B cell (primary cell): ENCODE measurements at regions of chr21 and their contacts with region 1.

Region 1: DNA sequence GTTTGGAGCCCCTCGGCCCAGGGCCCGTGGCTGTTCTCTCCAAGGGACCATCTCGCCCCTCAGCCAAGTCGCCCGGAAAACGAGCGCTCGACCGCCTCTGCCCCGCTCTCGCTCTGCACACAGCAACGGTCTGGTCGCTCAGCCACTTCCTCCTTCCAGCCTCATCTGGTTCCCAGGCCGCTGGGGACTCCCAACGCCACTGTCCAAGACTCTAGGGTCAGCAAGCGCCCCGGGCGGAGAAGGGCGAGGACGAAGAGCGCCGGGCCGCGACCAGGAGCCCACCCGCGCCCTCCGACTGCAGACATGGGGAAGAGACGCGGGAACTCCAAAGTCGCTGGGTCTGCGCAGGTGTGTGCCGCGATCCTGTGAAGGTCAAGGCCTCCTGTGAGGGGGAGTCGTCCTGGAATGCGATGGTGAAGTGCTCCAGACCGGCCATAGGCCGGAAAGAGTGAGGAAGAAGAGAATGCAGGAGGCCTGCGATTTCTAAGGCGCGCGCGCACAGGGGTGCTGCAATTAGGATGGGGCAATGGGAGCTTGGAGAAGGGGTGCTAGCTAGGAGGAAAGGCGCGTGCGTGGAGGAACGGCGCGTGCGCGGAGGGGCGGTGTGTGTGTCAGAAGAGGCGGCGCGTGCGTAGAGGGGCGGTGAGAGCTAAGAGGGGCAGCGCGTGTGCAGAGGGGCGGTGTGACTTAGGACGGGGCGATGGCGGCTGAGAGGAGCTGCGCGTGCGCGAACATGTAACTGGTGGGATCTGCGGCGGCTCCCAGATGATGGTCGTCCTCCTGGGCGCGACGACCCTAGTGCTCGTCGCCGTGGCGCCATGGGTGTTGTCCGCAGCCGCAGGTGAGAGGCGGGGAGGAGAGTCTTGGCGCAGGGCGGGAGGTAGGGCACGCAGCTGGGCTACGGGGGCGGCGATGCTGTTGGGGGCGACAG is at the start of gene IFNAR1:
- DNase-seq: peak; percentile 99
- ATAC-seq: peak; percentile 81
- H3K4me3 ChIP-seq: peak within 1 kb of the TSS; percentile 83 to 98 (median 97)
- H3K4me3 Mint-ChIP-seq: no peak within 1 kb of the TSS
- H3K27ac ChIP-seq: peak within 1 kb of the TSS; percentile 91 to 97
- H3K27ac Mint-ChIP-seq: no peak within 1 kb of the TSS
- H3K4me1 ChIP-seq: peaks cover 28 to 35% of the 10 kb centered on the region in 2 donors
- H3K4me1 Mint-ChIP-seq: peaks cover 30% of the 10 kb centered on the region
- H3K27me3 ChIP-seq: no peaks in the 10 kb centered on the region
- H3K27me3 Mint-ChIP-seq: no peaks in the 10 kb centered on the region
- CTCF ChIP-seq: no peak
- total RNA-seq, gene IFNAR1: 55.7 and 57.7 TPM in 2 replicates

Region 2: DNA sequence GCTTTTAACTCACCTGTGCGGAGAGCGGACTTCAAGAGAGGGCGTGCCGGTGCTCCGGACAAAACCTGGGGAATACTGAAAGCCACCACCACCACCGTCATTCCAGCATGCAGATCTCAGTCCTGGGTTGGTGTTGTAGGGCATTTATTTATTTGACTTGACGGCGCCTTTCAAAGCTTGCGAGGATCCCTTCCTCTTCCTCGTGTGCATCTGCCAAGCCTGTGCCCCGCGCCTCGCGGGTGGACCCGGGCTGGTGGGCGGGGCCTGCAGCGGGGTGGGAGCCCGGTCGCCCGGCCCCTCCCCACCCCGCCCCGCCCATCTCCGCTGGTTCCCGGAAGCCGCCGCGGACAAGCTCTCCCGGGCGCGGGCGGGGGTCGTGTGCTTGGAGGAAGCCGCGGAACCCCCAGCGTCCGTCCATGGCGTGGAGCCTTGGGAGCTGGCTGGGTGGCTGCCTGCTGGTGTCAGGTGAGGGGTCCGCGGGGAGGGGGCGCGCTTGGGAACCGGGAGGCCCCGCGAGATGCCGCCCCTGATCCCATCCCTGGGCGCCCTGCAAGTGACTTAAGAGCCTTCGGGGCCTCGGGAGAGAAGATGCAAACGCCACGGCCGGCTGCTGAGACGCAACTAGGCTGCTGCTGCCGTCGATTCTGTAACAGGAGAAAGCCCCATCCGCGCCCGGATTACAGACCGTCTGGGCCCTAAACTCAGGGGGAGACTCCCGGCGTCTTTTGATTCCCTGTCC is 58.3 kb before region 1 on chr21 and contains the start of gene IL10RB:
- CTCF ChIA-PET with region 1: interaction called, 10 read pairs
- POLR2A ChIA-PET with region 1: interaction called, 22 read pairs
- intact Hi-C with region 1: loop called (anchors 1 kb)
- DNase-seq: peak; percentile 87
- ATAC-seq: peak; percentile 77
- H3K4me3 ChIP-seq: peak within 1 kb of the TSS; percentile 71 to 94 (median 88)
- H3K4me3 Mint-ChIP-seq: peak within 1 kb of the TSS; percentile 98
- H3K27ac ChIP-seq: peak within 1 kb of the TSS; percentile 82 to 91
- H3K27ac Mint-ChIP-seq: peak within 1 kb of the TSS; percentile 95
- H3K4me1 ChIP-seq: peaks cover 35 to 56% of the 10 kb centered on the region in 2 donors
- H3K4me1 Mint-ChIP-seq: peaks cover 55% of the 10 kb centered on the region
- H3K27me3 ChIP-seq: no peaks in the 10 kb centered on the region
- H3K27me3 Mint-ChIP-seq: no peaks in the 10 kb centered on the region
- CTCF ChIP-seq: no peak
- total RNA-seq, gene IL10RB: 32.5 and 35.5 TPM in 2 replicates

Region 3: DNA sequence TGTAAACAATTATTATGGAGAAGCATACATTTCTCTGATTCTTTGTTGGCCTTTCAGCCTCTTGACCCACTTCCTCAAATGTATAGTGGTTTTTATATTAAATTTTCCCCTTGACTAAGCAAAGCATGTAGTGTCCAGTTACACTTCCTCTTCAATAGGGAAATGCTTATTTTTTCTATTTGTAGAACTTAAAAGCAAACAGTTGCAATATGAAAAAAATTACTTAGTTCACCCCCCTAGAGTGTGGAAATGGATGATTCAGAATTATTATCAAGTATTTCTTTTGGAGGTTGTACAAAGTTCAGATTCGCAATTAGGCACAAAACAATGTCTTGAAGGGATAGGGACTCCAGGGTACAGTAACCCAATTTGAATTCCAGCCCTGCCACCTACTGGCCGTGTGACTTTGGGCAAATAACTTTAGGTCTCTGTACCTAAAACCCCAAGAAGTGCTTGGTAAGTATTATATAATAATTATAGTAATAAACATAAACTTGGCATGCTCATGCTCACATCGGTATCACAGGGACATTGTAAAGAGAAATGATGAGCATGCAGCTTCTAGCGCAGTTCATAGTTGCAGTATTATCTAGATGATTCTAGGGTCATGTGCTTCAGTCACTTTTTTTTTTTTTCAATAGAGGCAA is 50.0 kb after region 1 on chr21:
- CTCF ChIA-PET with region 1: no interaction called
- POLR2A ChIA-PET with region 1: interaction called, 10 read pairs
- intact Hi-C with region 1: loop called (anchors 2 kb)
- DNase-seq: peak; percentile 82
- ATAC-seq: peak; percentile 79
- H3K4me3 ChIP-seq: peak overlapping the region; percentile 7 to 33 (median 26)
- H3K4me3 Mint-ChIP-seq: peak overlapping the region; percentile 76
- H3K27ac ChIP-seq: peak overlapping the region; percentile 76 to 87
- H3K27ac Mint-ChIP-seq: peak overlapping the region; percentile 89
- H3K4me1 ChIP-seq: peaks cover 83 to 91% of the 10 kb centered on the region in 2 donors
- H3K4me1 Mint-ChIP-seq: peaks cover 72% of the 10 kb centered on the region
- H3K27me3 ChIP-seq: no peaks in the 10 kb centered on the region
- H3K27me3 Mint-ChIP-seq: no peaks in the 10 kb centered on the region
- CTCF ChIP-seq: peak; percentile 51

Region 4: GRCh38 chr21:33403779-33404585 is 79.4 kb after region 1 on chr21:
- CTCF ChIA-PET with region 1: interaction called, 12 read pairs
- POLR2A ChIA-PET with region 1: interaction called, 7 read pairs
- intact Hi-C with region 1: loop called (anchors 1 kb)
- DNase-seq: peak; percentile 67
- ATAC-seq: peak; percentile 39
- H3K4me3 ChIP-seq: peak overlapping the region; percentile 85 to 94 (median 91)
- H3K4me3 Mint-ChIP-seq: peak overlapping the region; percentile 100
- H3K27ac ChIP-seq: peak overlapping the region; percentile 75 to 83
- H3K27ac Mint-ChIP-seq: peak overlapping the region; percentile 99
- H3K4me1 ChIP-seq: peaks cover 59 to 81% of the 10 kb centered on the region in 2 donors
- H3K4me1 Mint-ChIP-seq: peaks cover 71% of the 10 kb centered on the region
- H3K27me3 ChIP-seq: no peaks in the 10 kb centered on the region
- H3K27me3 Mint-ChIP-seq: no peaks in the 10 kb centered on the region
- CTCF ChIP-seq: no peak

Region 5: DNA sequence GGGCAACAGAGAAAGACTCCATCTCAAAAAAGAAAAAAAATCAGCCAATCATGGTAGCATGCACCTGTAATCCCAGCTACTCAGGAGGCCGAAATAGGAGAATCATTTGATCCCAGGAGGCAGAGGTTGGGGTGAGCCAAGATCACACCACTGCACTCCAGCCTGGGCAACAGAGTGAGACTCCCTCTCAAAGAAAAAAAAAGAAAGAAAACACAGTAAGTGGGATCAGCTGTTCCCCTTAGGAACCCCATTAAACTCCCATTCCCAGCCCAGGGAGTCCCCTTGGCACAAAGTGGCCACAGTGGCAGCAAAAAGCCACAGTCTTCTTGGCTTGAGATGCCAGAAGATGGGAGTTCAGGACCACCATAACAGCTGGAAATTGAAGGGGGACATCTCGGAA is 146.1 kb after region 1 on chr21:
- CTCF ChIA-PET with region 1: no interaction called
- POLR2A ChIA-PET with region 1: no interaction called
- intact Hi-C with region 1: no loop called
- DNase-seq: no peak
- ATAC-seq: no peak
- H3K4me3 ChIP-seq: no peak overlapping the region
- H3K4me3 Mint-ChIP-seq: no peak overlapping the region
- H3K27ac ChIP-seq: no peak overlapping the region
- H3K27ac Mint-ChIP-seq: no peak overlapping the region
- H3K4me1 ChIP-seq: no peaks in the 10 kb centered on the region
- H3K4me1 Mint-ChIP-seq: peaks cover 7% of the 10 kb centered on the region
- H3K27me3 ChIP-seq: no peaks in the 10 kb centered on the region
- H3K27me3 Mint-ChIP-seq: no peaks in the 10 kb centered on the region
- CTCF ChIP-seq: no peak

Region 6: GRCh38 chr21:33491373-33492102 is 167.0 kb after region 1 on chr21 and contains the start of gene DNAJC28:
- CTCF ChIA-PET with region 1: no interaction called
- POLR2A ChIA-PET with region 1: no interaction called
- intact Hi-C with region 1: no loop called
- DNase-seq: peak; percentile 98
- ATAC-seq: peak; percentile 97
- H3K4me3 ChIP-seq: peak within 1 kb of the TSS; percentile 65 to 87 (median 80)
- H3K4me3 Mint-ChIP-seq: peak within 1 kb of the TSS; percentile 87
- H3K27ac ChIP-seq: peak within 1 kb of the TSS; percentile 29 to 62
- H3K27ac Mint-ChIP-seq: peak within 1 kb of the TSS; percentile 87
- H3K4me1 ChIP-seq: peaks cover 0 to 9% of the 10 kb centered on the region in 2 donors
- H3K4me1 Mint-ChIP-seq: peaks cover 10% of the 10 kb centered on the region
- H3K27me3 ChIP-seq: no peaks in the 10 kb centered on the region
- H3K27me3 Mint-ChIP-seq: no peaks in the 10 kb centered on the region
- CTCF ChIP-seq: no peak
- total RNA-seq, gene DNAJC28: 2.4 and 2.5 TPM in 2 replicates